Activated T-helper 2 cell treated with anti-CD3 and anti-CD28 coated beads, Interferon-gamma antibody, Interleukin-2, Interleukin-4, amounts not matched to agents 10 μg/mL and 5 μg/mL and 100 μg/mL, durations not matched to agents 14 hours and 24 hours and 36 hours (primary cell): ENCODE measurements at regions of chr1 and their contacts with region 1.

Region 1: GRCh38 chr1:236103646-236104218 is 38.6 kb upstream of the GPR137B start:
- DNase-seq: peak; percentile 41
- H3K4me3 Mint-ChIP-seq: no peak overlapping the region
- H3K27ac Mint-ChIP-seq: no peak overlapping the region
- H3K4me1 Mint-ChIP-seq: peaks cover 10% of the 10 kb centered on the region
- H3K27me3 Mint-ChIP-seq: peaks cover 4% of the 10 kb centered on the region

Region 2: GRCh38 chr1:236142253-236143103 is 38.7 kb after region 1 on chr1 and contains the start of gene GPR137B:
- intact Hi-C with region 1: loop called (anchors 2 kb)
- DNase-seq: peak; percentile 51
- H3K4me3 Mint-ChIP-seq: peak within 1 kb of the TSS; percentile 99
- H3K27ac Mint-ChIP-seq: peak within 1 kb of the TSS; percentile 81
- H3K4me1 Mint-ChIP-seq: peaks cover 16% of the 10 kb centered on the region
- H3K27me3 Mint-ChIP-seq: peaks cover 42% of the 10 kb centered on the region
- total RNA-seq, gene GPR137B: 6.8 and 7.8 TPM in 2 replicates

Region 3: GRCh38 chr1:236281654-236282424 is 178.1 kb after region 1 on chr1 and contains the start of gene ERO1B:
- intact Hi-C with region 1: loop called (anchors 5 kb)
- DNase-seq: peak; percentile 96
- H3K4me3 Mint-ChIP-seq: peak within 1 kb of the TSS; percentile 83
- H3K27ac Mint-ChIP-seq: peak within 1 kb of the TSS; percentile 53
- H3K4me1 Mint-ChIP-seq: peaks cover 34% of the 10 kb centered on the region
- H3K27me3 Mint-ChIP-seq: peaks cover 22% of the 10 kb centered on the region
- total RNA-seq, gene ERO1B: 2.4 and 3.2 TPM in 2 replicates

Region 4: GRCh38 chr1:236523701-236524141 is 420.0 kb after region 1 on chr1 and contains the start of gene LGALS8:
- intact Hi-C with region 1: loop called (anchors 10 kb)
- DNase-seq: peak; percentile 80
- H3K4me3 Mint-ChIP-seq: peak within 1 kb of the TSS; percentile 98
- H3K27ac Mint-ChIP-seq: peak within 1 kb of the TSS; percentile 99
- H3K4me1 Mint-ChIP-seq: peaks cover 14% of the 10 kb centered on the region
- H3K27me3 Mint-ChIP-seq: peaks cover 18% of the 10 kb centered on the region
- total RNA-seq, gene LGALS8: 70.9 and 74.8 TPM in 2 replicates

Region 5: GRCh38 chr1:236795035-236795756 is 691.5 kb after region 1 on chr1 and contains the start of gene MTR:
- intact Hi-C with region 1: loop called (anchors 10 kb)
- DNase-seq: peak; percentile 94
- H3K4me3 Mint-ChIP-seq: peak within 1 kb of the TSS; percentile 92
- H3K27ac Mint-ChIP-seq: peak within 1 kb of the TSS; percentile 98
- H3K4me1 Mint-ChIP-seq: peaks cover 32% of the 10 kb centered on the region
- H3K27me3 Mint-ChIP-seq: peaks cover 10% of the 10 kb centered on the region
- total RNA-seq, gene MTR: 59.2 and 62.2 TPM in 2 replicates

Region 6: GRCh38 chr1:236868625-236869467 is 765.1 kb after region 1 on chr1:
- intact Hi-C with region 1: loop called (anchors 2 kb)
- DNase-seq: peak; percentile 18
- H3K4me3 Mint-ChIP-seq: no peak overlapping the region
- H3K27ac Mint-ChIP-seq: no peak overlapping the region
- H3K4me1 Mint-ChIP-seq: peaks cover 17% of the 10 kb centered on the region
- H3K27me3 Mint-ChIP-seq: no peaks in the 10 kb centered on the region

Region 7: DNA sequence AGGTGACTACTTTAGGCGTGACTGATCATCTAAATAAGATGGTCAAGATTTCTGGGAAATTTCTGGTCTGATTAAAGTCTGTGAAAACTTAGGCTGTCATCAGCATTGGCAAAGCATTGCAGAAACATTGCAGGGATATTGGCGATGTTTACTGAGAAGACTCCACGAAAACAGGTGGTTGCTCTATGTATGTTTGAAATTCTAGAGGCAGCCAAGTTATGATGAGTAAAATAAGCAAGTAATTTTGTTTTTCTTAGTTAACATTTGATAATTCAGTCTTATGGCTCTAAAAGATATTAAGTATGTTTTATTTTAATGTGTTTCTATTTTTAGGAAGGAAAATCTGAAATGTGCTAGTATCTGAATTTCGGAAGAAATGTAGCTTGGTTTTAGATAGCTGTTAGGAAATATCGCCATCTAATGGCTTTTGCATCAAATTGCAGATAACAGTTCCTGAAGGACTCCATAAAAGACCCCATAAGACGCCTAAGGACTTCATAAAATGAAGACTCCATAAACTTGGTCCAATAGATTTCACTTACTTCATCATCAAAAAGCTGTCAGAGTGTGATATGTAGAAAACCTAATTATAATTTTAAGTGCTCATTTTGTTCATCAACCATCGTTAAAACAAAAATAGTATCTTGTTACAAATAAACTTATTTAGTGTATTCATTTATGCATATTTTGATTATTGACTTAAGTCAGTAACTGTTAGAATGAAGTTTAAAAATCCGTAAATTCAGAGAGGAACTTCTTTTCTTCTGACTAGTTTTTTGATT is 1282.8 kb after region 1 on chr1:
- intact Hi-C with region 1: loop called (anchors 2 kb)
- DNase-seq: no peak
- H3K4me3 Mint-ChIP-seq: no peak overlapping the region
- H3K27ac Mint-ChIP-seq: no peak overlapping the region
- H3K4me1 Mint-ChIP-seq: peaks cover 9% of the 10 kb centered on the region
- H3K27me3 Mint-ChIP-seq: no peaks in the 10 kb centered on the region